ENCODE measurements at regions of chr19 and their contacts with region 1.

Region 1: GRCh38 chr19:39390755-39391592 is at the starts of genes MED29 and PAF1:
- DNase-seq: peak; percentile 84
- ATAC-seq: peak; percentile 91
- H3K4me3 Mint-ChIP-seq: peak within 1 kb of the TSS; percentile 91
- H3K27ac Mint-ChIP-seq: peak within 1 kb of the TSS; percentile 98
- H3K4me1 Mint-ChIP-seq: peaks cover 38% of the 10 kb centered on the region
- H3K27me3 Mint-ChIP-seq: no peaks in the 10 kb centered on the region
- CTCF ChIP-seq: no peak
- total RNA-seq, gene MED29: 38.0 and 39.0 TPM in 2 replicates
- total RNA-seq, gene PAF1: 50.3 and 52.4 TPM in 2 replicates

Region 2: GRCh38 chr19:39341719-39342604 is 49.0 kb before region 1 on chr19 and contains the start of gene SAMD4B:
- CTCF ChIA-PET with region 1: interaction called, 9 read pairs
- POLR2A ChIA-PET with region 1: interaction called, 35 read pairs
- intact Hi-C with region 1: loop called (anchors 1 kb)
- DNase-seq: peak; percentile 97
- ATAC-seq: peak; percentile 91
- H3K4me3 Mint-ChIP-seq: peak within 1 kb of the TSS; percentile 99
- H3K27ac Mint-ChIP-seq: peak within 1 kb of the TSS; percentile 97
- H3K4me1 Mint-ChIP-seq: peaks cover 69% of the 10 kb centered on the region
- H3K27me3 Mint-ChIP-seq: no peaks in the 10 kb centered on the region
- CTCF ChIP-seq: no peak
- total RNA-seq, gene SAMD4B: 53.0 and 60.7 TPM in 2 replicates

Region 3: DNA sequence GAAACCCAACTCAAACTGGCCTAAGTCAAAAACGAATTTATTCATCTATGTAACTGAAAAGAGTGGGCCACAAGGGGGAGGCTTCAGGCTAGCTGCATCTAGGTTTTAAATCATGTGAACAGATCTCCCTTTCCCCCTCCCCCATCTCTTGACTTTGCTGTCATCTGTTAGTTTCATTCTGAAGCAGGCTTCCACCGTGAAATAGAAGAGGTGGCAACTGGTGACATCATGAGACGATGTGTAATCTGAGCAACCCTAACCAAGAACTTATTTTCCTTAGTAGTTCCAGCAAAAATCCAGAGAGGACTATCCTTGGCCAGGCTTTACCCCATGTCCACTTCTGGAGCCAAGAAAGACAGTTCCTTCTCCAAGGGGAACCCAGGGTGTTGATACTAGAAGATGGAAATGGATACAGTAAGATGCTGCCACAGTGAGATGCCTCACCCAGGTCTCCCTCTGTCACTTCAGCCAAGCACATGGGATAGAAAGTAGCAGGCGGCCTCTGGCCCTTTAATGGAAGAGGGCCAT is 39.4 kb before region 1 on chr19:
- CTCF ChIA-PET with region 1: interaction called, 3 read pairs
- POLR2A ChIA-PET with region 1: interaction called, 9 read pairs
- intact Hi-C with region 1: loop called (anchors 2 kb)
- DNase-seq: no peak
- ATAC-seq: peak; percentile 97
- H3K4me3 Mint-ChIP-seq: no peak overlapping the region
- H3K27ac Mint-ChIP-seq: peak overlapping the region; percentile 86
- H3K4me1 Mint-ChIP-seq: peaks cover 25% of the 10 kb centered on the region
- H3K27me3 Mint-ChIP-seq: no peaks in the 10 kb centered on the region
- CTCF ChIP-seq: no peak

Region 4: DNA sequence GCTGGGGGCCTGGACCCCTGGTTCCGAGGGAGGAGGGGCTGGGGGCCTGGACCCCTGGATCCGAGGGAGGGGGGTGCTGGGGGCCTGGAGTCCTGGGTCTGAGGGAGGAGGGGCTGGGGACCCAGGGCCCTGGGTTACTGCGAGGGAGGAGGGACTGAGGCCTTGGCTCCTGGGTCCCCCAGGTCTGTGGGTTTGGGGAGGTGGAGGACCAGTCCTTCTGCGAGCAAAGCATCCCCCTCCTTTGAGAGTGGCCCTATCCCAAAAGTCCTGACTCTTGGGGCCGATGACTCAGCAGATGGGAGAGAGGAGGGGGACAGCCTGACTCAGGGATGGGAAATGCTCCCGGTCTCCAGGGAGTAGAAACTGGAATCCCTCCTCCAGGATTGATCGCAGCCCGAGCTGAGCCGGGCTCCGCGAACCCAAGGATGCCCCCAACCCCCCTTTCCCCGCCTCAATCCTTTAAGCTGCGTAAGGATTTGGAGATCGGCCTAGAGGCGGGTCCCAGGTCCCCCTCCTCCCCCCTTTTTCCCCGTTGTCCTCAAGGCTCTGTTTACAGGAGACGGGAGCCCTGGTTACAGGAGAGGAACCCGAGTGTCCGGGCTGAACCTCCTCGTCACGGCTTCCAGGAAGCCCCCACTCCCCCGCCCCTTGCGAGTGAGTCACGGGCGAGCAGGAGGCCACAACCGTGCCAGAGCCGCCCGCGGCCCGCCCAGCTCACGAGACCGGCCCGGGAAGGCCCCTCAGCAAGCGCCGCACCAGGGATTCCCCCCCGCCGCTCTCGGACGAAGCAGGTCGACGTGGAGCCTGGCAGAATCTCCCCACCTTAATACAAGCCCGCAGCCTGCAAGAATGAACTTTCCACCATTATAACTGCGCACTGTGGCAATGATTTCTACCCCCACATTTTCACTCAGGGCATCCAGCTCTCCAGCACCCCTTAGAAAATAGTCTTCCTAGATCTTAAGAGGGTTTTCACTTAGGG is 12.6 kb after region 1 on chr19:
- CTCF ChIA-PET with region 1: interaction called, 3 read pairs
- POLR2A ChIA-PET with region 1: interaction called, 213 read pairs
- intact Hi-C with region 1: loop called (anchors 1 kb)
- DNase-seq: peak; percentile 93
- ATAC-seq: peak; percentile 38
- H3K4me3 Mint-ChIP-seq: peak overlapping the region; percentile 89
- H3K27ac Mint-ChIP-seq: peak overlapping the region; percentile 91
- H3K4me1 Mint-ChIP-seq: peaks cover 74% of the 10 kb centered on the region
- H3K27me3 Mint-ChIP-seq: no peaks in the 10 kb centered on the region
- CTCF ChIP-seq: no peak

Region 5: GRCh38 chr19:39422020-39422419 is 31.0 kb after region 1 on chr19:
- CTCF ChIA-PET with region 1: no interaction called
- POLR2A ChIA-PET with region 1: no interaction called
- intact Hi-C with region 1: no loop called
- DNase-seq: no peak
- ATAC-seq: no peak
- H3K4me3 Mint-ChIP-seq: no peak overlapping the region
- H3K27ac Mint-ChIP-seq: no peak overlapping the region
- H3K4me1 Mint-ChIP-seq: peaks cover 3% of the 10 kb centered on the region
- H3K27me3 Mint-ChIP-seq: no peaks in the 10 kb centered on the region
- CTCF ChIP-seq: no peak

Region 6: DNA sequence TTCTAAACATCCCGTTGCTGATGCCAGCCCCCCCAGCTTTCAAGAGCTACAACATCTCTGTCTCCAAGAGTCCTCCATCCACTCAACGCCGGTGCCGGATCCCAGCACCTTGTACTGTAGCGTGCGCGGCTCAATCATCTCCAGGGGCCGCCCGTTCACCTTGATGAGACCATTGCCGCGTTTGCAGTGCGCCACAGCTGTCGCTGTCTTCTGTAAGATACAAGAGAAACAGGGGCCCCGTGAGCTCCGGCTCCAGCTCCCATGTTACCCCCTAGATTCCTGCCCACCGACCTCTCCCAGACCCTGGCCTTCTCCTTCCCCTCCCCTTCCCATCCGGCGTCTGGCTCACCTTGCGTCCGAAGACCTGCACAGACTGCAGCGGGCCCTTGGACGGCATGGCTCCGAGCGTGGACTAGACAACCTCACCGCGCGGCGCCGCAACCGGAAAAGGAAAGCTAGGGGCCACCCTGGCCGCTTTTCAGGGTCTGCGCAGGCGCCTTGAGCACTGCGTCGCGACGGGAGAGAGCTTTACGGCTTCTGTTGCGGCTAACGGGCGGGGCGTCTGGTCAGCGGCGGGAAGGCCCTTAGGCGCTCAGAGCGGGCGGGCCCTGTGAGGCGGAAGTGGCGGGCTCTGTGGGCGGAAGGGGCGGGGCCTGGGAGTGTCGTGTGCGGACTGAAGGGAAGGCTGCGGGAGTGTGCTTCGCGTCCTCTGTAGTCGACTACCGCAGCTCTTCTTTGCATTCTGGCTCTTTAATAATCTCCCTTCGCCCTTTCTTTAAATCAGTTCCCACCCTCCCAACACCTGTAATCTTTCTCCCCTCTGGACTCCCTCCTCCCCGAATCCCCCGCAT is 44.8 kb after region 1 on chr19 and contains the start of gene RPS16:
- CTCF ChIA-PET with region 1: interaction called, 6 read pairs
- POLR2A ChIA-PET with region 1: interaction called, 74 read pairs
- intact Hi-C with region 1: loop called (anchors 1 kb)
- DNase-seq: peak; percentile 98
- ATAC-seq: peak; percentile 92
- H3K4me3 Mint-ChIP-seq: peak within 1 kb of the TSS; percentile 98
- H3K27ac Mint-ChIP-seq: peak within 1 kb of the TSS; percentile 96
- H3K4me1 Mint-ChIP-seq: peaks cover 53% of the 10 kb centered on the region
- H3K27me3 Mint-ChIP-seq: no peaks in the 10 kb centered on the region
- CTCF ChIP-seq: no peak
- total RNA-seq, gene RPS16: 4,002 and 4,656 TPM in 2 replicates

Region 7: DNA sequence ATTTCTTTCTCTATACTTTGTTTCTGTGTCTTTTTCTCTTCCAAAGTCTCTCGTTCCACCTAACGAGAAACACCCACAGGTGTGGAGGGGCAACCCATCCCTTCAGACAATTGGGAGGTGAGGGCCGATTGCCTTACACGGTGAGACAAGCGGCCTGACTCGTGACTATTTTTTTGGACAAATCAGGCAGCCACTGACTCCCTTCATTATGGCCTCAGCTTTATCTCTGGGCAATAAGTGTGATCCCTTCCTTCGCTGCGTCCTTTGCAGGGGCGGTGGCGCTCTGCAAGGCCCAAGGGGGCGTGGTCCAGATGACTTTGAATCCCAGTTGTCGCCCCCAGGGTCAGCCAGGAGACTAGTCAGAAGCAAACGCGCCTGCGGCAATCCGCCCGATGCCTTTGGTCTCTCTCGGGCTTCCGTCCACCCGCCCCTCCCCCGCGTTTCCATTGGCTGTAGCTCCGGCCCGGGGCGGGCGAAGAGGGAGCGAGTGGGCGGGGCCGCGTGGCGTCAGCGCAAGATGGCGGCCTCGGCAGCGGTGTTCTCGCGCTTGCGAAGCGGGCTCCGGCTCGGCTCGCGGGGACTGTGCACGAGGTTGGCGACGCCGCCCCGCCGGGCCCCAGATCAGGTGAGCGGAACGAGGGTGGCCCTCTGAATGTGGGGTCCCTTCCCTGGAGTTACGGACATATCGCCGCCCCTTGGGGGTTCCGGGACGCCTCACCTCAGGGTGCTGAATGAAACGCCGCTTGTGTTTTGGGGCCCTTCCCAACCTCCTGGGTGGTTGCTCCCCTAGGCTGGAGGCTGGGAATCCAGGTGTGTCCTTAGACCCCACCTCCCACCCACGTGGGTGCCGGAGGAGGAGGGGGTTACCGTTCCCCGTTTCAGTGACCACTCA is 89.6 kb after region 1 on chr19 and contains the start of gene TIMM50:
- CTCF ChIA-PET with region 1: no interaction called
- POLR2A ChIA-PET with region 1: interaction called, 3 read pairs
- intact Hi-C with region 1: loop called (anchors 1 kb)
- DNase-seq: peak; percentile 98
- ATAC-seq: peak; percentile 99
- H3K4me3 Mint-ChIP-seq: peak within 1 kb of the TSS; percentile 91
- H3K27ac Mint-ChIP-seq: peak within 1 kb of the TSS; percentile 85
- H3K4me1 Mint-ChIP-seq: peaks cover 25% of the 10 kb centered on the region
- H3K27me3 Mint-ChIP-seq: no peaks in the 10 kb centered on the region
- CTCF ChIP-seq: no peak
- total RNA-seq, gene TIMM50: 63.8 and 68.9 TPM in 2 replicates